CD8-positive, alpha-beta memory T cell (primary cell): ENCODE measurements at regions of chr3 and their contacts with region 1.

Region 1: GRCh38 chr3:114299421-114299820 is 5.6 kb downstream of the TIGIT start:
- DNase-seq: peak; percentile 20 to 72 (median 24)
- H3K4me3 ChIP-seq: peak overlapping the region; percentile 8
- H3K4me3 Mint-ChIP-seq: peak overlapping the region; percentile 82 to 87 (median 85)
- H3K27ac ChIP-seq: peak overlapping the region; percentile 29
- H3K27ac Mint-ChIP-seq: peak overlapping the region; percentile 70 to 96 (median 93)
- H3K4me1 ChIP-seq: peaks cover 8% of the 10 kb centered on the region
- H3K4me1 Mint-ChIP-seq: peaks cover 63 to 86% (median 82%) of the 10 kb centered on the region in 3 donors
- H3K27me3 ChIP-seq: no peaks in the 10 kb centered on the region
- H3K27me3 Mint-ChIP-seq: no peaks in the 10 kb centered on the region

Region 2: DNA sequence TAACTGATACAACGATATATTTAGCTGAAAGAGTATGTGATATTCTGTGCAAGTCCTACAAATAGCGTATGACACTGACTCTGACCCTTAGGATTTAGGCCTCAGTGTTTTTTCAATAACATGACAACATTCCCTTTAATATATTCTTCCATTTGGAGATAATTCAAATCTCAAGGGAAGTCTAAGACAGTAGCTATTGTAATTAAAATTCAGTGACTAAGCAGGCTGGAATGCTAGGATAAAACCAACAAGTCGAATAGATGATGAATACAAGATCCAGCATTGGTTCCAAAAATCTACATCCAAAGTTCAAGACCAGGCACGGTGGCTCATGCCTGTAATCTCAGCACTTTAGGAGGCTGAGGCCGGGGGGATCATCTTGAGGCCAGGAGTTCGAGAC is 186.7 kb before region 1 on chr3:
- CTCF ChIA-PET with region 1: no interaction called
- POLR2A ChIA-PET with region 1: no interaction called
- DNase-seq: no peak
- H3K4me3 ChIP-seq: no peak overlapping the region
- H3K4me3 Mint-ChIP-seq: no peak overlapping the region
- H3K27ac ChIP-seq: no peak overlapping the region
- H3K27ac Mint-ChIP-seq: no peak overlapping the region
- H3K4me1 ChIP-seq: no peaks in the 10 kb centered on the region
- H3K4me1 Mint-ChIP-seq: no peaks in the 10 kb centered on the region
- H3K27me3 ChIP-seq: no peaks in the 10 kb centered on the region
- H3K27me3 Mint-ChIP-seq: peaks cover 8 to 12% of the 10 kb centered on the region in 2 donors

Region 3: DNA sequence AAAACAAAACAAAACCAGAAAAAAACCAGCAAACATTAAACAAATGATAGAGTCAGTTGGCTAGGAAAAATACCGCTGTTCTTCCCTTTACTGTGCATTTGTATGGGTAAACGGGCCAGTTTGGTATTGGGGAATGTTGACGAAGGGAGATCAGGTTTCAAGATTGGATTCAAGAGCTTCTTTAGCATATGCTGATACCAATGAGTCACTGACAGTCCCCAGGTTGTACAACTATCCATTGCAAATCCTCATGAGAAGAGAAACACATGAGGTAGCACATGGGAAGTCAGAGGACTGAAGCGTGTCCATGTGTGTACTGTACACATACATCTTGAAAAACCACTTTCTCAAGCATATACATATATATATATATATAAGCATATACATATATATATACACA is 20.0 kb after region 1 on chr3:
- CTCF ChIA-PET with region 1: interaction called, 10 read pairs
- POLR2A ChIA-PET with region 1: interaction called, 4 read pairs
- DNase-seq: no peak
- H3K4me3 ChIP-seq: no peak overlapping the region
- H3K4me3 Mint-ChIP-seq: peak overlapping the region in 1 of 7 donors; percentile 53
- H3K27ac ChIP-seq: no peak overlapping the region
- H3K27ac Mint-ChIP-seq: peak overlapping the region in 6 of 8 donors; percentile 3 to 73 (median 42)
- H3K4me1 ChIP-seq: peaks cover 31% of the 10 kb centered on the region
- H3K4me1 Mint-ChIP-seq: peaks cover 79 to 98% (median 91%) of the 10 kb centered on the region in 3 donors
- H3K27me3 ChIP-seq: no peaks in the 10 kb centered on the region
- H3K27me3 Mint-ChIP-seq: peaks cover 0 to 2% of the 10 kb centered on the region in 2 donors

Region 4: DNA sequence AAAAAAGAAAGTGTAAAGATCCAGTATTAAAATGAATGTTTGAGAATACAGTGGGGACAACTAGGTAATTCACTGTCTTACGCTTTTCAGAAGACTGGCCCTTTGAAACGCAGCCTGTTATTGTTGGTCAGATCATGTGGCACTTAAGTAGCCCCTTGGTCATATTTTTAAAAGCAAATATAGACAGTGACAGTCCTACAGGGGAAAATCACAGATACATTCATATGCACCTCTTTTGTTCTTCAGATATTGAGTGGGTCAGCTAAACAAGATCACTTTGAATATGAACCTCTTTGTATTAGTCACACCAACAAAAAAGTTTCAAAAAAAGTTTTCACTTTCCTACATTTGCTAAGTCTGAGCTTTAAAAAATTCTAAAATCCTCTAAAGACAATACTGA is 30.4 kb after region 1 on chr3:
- CTCF ChIA-PET with region 1: interaction called, 18 read pairs
- POLR2A ChIA-PET with region 1: interaction called, 4 read pairs
- DNase-seq: no peak
- H3K4me3 ChIP-seq: no peak overlapping the region
- H3K4me3 Mint-ChIP-seq: peak overlapping the region in 2 of 7 donors; percentile 17 to 24
- H3K27ac ChIP-seq: no peak overlapping the region
- H3K27ac Mint-ChIP-seq: peak overlapping the region in 4 of 8 donors; percentile 8 to 45 (median 23)
- H3K4me1 ChIP-seq: peaks cover 32% of the 10 kb centered on the region
- H3K4me1 Mint-ChIP-seq: peaks cover 78 to 96% (median 95%) of the 10 kb centered on the region in 3 donors
- H3K27me3 ChIP-seq: no peaks in the 10 kb centered on the region
- H3K27me3 Mint-ChIP-seq: no peaks in the 10 kb centered on the region